ENCODE measurements at regions of chrX and their contacts with region 1.

Region 1: DNA sequence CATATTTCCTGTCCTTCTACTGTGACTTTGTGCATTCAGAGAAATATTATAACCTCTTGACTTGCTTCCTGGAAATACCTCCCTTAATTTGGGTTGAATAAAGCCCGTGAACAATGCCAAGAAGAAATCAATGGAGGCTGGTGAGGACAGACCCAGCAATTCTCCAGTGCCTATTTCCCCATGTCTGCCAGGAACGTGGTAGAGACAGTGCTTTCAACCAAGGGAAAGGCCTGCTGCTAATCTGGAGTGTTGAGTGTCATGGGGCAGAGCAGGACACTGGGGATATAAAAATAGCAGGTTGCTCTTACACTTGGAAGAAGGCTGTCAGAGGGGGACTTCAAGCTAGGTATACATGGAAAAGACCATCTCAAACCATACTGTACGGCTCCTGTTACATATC is 19.9 kb downstream of the TSC22D3 start:
- DNase-seq: peak in 2 of 5 donors; percentile 25 to 51
- ATAC-seq: peak; percentile 76 to 90 (median 81)
- H3K4me3 ChIP-seq: no peak overlapping the region
- H3K27ac ChIP-seq: peak overlapping the region; percentile 27 to 88 (median 74)
- H3K4me1 ChIP-seq: peaks cover 0 to 55% (median 31%) of the 10 kb centered on the region in 12 donors
- H3K27me3 ChIP-seq: peaks cover 0 to 9% (median 0%) of the 10 kb centered on the region in 9 donors
- CTCF ChIP-seq: no peak
- POLR2A ChIP-seq: no peak

Region 2: DNA sequence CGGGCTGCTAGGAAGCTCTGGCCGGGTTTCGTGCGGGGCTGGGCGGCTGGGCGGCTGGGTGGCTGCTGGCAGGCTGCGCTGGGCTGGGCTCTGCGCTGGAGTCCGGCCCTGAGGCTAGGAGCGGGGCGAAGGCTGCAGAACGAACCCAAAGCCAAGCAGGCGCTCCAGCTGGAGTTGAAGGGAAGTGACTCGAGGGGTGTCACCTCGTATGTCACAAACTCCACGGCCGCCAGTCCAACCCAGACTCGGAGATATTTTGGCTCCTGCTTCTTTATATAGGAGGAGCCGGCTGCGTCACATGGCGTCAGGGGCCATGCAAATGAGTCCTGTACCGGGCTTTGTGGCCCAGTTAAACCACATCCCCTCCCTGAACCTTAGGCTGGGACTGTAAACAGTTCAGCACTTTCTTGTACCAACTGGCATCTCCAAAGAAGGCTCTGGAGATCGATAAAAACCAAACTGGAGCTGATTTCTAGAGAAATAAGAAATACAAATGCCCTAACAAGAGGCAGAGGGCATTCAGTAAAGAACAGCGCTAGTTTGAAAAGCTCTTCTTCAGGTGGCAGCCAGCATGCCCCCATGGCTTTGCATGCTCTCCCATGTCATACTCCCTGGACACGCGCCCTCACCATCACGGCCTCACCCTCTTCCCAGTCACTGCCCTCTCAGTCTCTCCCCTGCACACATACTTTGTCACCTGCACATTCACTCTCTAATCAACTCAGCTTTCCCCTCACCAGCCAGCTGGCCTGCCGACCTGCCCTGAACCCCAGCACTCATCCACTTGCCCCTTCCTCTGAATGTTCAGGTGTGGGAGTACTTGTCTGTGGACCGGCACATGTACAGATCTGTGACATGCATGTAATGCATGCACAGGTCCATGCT is 38.7 kb before region 1 on chrX:
- intact Hi-C with region 1: loop called in 1 of 10 experiments (anchors 5 kb)
- DNase-seq: peak; percentile 87 to 90 (median 88)
- ATAC-seq: peak; percentile 74 to 88 (median 82)
- H3K4me3 ChIP-seq: peak overlapping the region; percentile 46 to 95 (median 75)
- H3K27ac ChIP-seq: peak overlapping the region; percentile 89 to 99 (median 93)
- H3K4me1 ChIP-seq: peaks cover 0 to 60% (median 10%) of the 10 kb centered on the region in 12 donors
- H3K27me3 ChIP-seq: peaks cover 0 to 13% (median 0%) of the 10 kb centered on the region in 9 donors
- CTCF ChIP-seq: no peak
- POLR2A ChIP-seq: peak; percentile 17 to 97